ENCODE measurements at regions of chr3 and their contacts with region 1.

Region 1: DNA sequence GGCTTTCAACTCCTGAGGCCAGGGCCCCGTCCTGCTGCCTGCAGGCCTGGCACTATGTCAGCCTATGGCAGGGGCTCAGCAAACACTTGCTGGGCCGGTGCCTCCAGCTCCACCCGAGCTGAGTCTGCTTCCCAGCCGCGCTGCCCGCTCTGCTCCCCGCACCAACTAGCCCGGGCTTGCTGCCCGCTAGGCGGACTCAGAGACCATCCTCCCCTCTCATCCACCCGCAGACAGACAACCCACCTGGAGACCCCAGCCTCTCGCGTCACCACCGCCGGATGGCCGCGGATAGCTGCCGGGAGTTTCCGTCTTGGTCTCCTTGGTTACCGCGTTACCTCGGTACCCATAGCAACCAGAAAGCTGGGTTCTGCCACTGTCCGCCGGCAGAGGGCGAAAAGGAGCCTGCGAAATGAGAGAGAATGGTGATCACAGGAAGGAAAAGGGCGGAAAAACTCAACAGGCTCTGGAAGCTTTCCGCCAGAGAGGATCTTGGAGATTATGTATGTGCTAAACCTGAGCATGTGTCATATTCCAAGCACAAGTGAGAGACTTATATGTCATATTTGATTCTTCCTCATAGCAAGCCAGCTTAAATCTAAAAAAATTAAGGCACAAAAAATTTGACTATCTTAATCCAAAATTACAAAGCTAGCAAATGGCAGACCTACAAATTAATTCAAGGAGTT is at the start of gene ZBBX:
- DNase-seq: peak; percentile 84 to 89
- ATAC-seq: peak; percentile 89 to 94 (median 93)
- H3K4me3 ChIP-seq: no peak within 1 kb of the TSS
- H3K4me3 Mint-ChIP-seq: peak within 1 kb of the TSS; percentile 78
- H3K27ac ChIP-seq: no peak within 1 kb of the TSS
- H3K27ac Mint-ChIP-seq: peak within 1 kb of the TSS; percentile 85 to 88
- H3K4me1 ChIP-seq: peaks cover 5% of the 10 kb centered on the region
- H3K4me1 Mint-ChIP-seq: peaks cover 12 to 14% of the 10 kb centered on the region in 2 donors
- H3K27me3 ChIP-seq: no peaks in the 10 kb centered on the region
- H3K27me3 Mint-ChIP-seq: peaks cover 5 to 16% of the 10 kb centered on the region in 2 donors
- CTCF ChIP-seq: peak; percentile 80
- total RNA-seq, gene ZBBX: not detected

Region 2: GRCh38 chr3:167406875-167407492 is 26.8 kb after region 1 on chr3:
- intact Hi-C with region 1: no loop called
- DNase-seq: peak in 1 of 2 donors; percentile 10
- ATAC-seq: peak in 2 of 3 donors; percentile 36 to 47
- H3K4me3 ChIP-seq: no peak overlapping the region
- H3K4me3 Mint-ChIP-seq: no peak overlapping the region
- H3K27ac ChIP-seq: no peak overlapping the region
- H3K27ac Mint-ChIP-seq: no peak overlapping the region
- H3K4me1 ChIP-seq: no peaks in the 10 kb centered on the region
- H3K4me1 Mint-ChIP-seq: no peaks in the 10 kb centered on the region
- H3K27me3 ChIP-seq: no peaks in the 10 kb centered on the region
- H3K27me3 Mint-ChIP-seq: no peaks in the 10 kb centered on the region
- CTCF ChIP-seq: no peak

Region 3: DNA sequence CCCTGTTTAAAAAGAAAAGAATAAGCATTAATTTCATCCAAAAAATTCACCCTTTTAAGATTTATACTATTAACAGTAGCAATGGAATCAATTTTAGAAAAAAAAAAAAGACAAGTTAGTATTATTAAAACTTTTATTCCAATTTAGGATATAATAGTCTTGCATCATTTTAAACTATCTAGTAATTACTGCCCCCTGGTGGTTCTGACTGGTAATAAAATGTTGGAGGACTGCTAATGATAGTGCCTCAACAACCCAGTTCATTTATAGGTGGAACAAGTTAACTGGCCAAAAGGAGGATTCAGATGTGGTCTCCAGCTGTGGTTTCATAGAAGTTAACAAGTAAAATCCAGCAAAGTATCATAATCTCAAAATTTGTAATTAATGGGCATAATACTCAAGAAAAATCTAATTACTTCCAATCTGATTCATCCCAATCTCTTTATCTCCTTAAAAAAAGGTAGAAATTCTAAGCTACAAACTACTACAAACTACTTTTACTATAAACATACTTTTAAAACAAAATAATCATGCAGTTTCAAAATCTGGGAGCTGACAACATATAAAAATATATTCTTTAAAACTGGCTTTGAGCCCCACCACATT is 304.3 kb after region 1 on chr3:
- intact Hi-C with region 1: loop called (anchors 1 kb)
- DNase-seq: peak in 1 of 2 donors; percentile 80
- ATAC-seq: peak; percentile 77 to 79 (median 78)
- H3K4me3 ChIP-seq: no peak overlapping the region
- H3K4me3 Mint-ChIP-seq: no peak overlapping the region
- H3K27ac ChIP-seq: no peak overlapping the region
- H3K27ac Mint-ChIP-seq: peak overlapping the region in 1 of 2 donors; percentile 53
- H3K4me1 ChIP-seq: no peaks in the 10 kb centered on the region
- H3K4me1 Mint-ChIP-seq: peaks cover 0 to 7% of the 10 kb centered on the region in 2 donors
- H3K27me3 ChIP-seq: no peaks in the 10 kb centered on the region
- H3K27me3 Mint-ChIP-seq: no peaks in the 10 kb centered on the region
- CTCF ChIP-seq: peak; percentile 93

Region 4: GRCh38 chr3:167734498-167735232 is 354.5 kb after region 1 on chr3 and contains the start of gene PDCD10:
- intact Hi-C with region 1: loop called (anchors 5 kb)
- DNase-seq: peak; percentile 90 to 99
- ATAC-seq: peak; percentile 80 to 94 (median 83)
- H3K4me3 ChIP-seq: peak within 1 kb of the TSS; percentile 76
- H3K4me3 Mint-ChIP-seq: no peak within 1 kb of the TSS
- H3K27ac ChIP-seq: peak within 1 kb of the TSS; percentile 84
- H3K27ac Mint-ChIP-seq: no peak within 1 kb of the TSS
- H3K4me1 ChIP-seq: peaks cover 6% of the 10 kb centered on the region
- H3K4me1 Mint-ChIP-seq: peaks cover 15 to 24% of the 10 kb centered on the region in 2 donors
- H3K27me3 ChIP-seq: no peaks in the 10 kb centered on the region
- H3K27me3 Mint-ChIP-seq: no peaks in the 10 kb centered on the region
- CTCF ChIP-seq: no peak
- total RNA-seq, gene PDCD10: 50.6 to 58.3 (median 50.8) TPM

Region 5: DNA sequence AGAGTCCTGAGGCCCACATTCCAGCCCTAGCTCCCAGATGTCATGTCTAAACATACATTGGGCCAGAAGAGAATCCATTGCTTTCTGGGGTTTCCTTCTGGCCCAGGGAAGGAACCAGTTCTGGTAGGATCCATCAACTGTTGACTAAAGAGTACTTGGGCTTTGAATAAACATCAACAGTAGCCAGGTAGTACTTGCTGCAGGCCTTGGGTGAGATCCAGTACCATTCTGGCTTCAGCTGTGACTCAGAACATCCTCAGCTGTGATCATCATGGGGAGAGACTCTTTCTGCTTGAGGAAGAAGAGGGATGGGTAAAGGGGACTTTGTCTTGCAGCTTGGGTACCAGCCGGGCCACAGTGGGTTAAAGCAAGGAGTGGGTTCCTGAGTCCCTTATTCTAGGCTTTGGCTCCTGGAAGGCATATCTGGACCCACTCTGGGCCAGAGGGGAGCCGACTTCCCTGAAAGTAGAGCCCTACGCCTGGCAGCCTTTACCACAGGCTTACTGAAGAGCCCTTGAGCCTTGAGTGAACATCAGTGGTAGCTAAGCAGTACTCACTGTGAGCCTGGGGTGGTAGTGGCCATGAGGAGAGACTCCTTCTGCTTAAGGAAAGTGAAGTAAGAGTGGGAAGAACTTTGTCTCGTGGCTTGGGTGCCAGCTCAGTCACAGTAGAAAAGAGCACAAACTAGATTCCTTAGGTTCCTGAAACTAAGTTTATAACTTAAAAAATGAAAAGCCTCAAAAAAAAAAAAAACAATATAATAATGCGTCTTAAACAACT is 587.3 kb after region 1 on chr3:
- intact Hi-C with region 1: no loop called
- DNase-seq: no peak
- ATAC-seq: no peak
- H3K4me3 ChIP-seq: no peak overlapping the region
- H3K4me3 Mint-ChIP-seq: no peak overlapping the region
- H3K27ac ChIP-seq: no peak overlapping the region
- H3K27ac Mint-ChIP-seq: no peak overlapping the region
- H3K4me1 ChIP-seq: no peaks in the 10 kb centered on the region
- H3K4me1 Mint-ChIP-seq: no peaks in the 10 kb centered on the region
- H3K27me3 ChIP-seq: no peaks in the 10 kb centered on the region
- H3K27me3 Mint-ChIP-seq: no peaks in the 10 kb centered on the region
- CTCF ChIP-seq: no peak